Psoas muscle (tissue), 8 donors: ENCODE measurements at regions of chr2 and their contacts with region 1.

Region 1: GRCh38 chr2:120525056-120526046 is 179.4 kb downstream of the INHBB start:
- DNase-seq: peak; percentile 41 to 62
- ATAC-seq: peak in 2 of 4 donors; percentile 39 to 45
- H3K4me3 ChIP-seq: no peak overlapping the region
- H3K27ac ChIP-seq: peak overlapping the region; percentile 65
- H3K4me1 ChIP-seq: peaks cover 6% of the 10 kb centered on the region
- H3K27me3 ChIP-seq: no peaks in the 10 kb centered on the region
- CTCF ChIP-seq: no peak

Region 2: GRCh38 chr2:121519732-121520640 is 994.6 kb after region 1 on chr2:
- intact Hi-C with region 1: loop called in 1 of 2 experiments (anchors 5 kb)
- DNase-seq: peak in 1 of 2 donors; percentile 48
- ATAC-seq: peak; percentile 43 to 80 (median 57)
- H3K4me3 ChIP-seq: no peak overlapping the region
- H3K27ac ChIP-seq: peak overlapping the region; percentile 70
- H3K4me1 ChIP-seq: peaks cover 32% of the 10 kb centered on the region
- H3K27me3 ChIP-seq: no peaks in the 10 kb centered on the region
- CTCF ChIP-seq: no peak